ENCODE measurements at regions of chr17 and their contacts with region 1.

Region 1: GRCh38 chr17:69592692-69593350 is 178.3 kb downstream of the MAP2K6 start:
- DNase-seq: no peak
- H3K4me3 ChIP-seq: no peak overlapping the region
- H3K27ac ChIP-seq: peak overlapping the region; percentile 33
- H3K4me1 ChIP-seq: peaks cover 22% of the 10 kb centered on the region
- H3K27me3 ChIP-seq: no peaks in the 10 kb centered on the region
- CTCF ChIP-seq: no peak
- POLR2A ChIP-seq: no peak

Region 2: GRCh38 chr17:69575346-69575761 is 17.5 kb before region 1 on chr17:
- CTCF ChIA-PET with region 1: interaction called, 5 read pairs
- POLR2A ChIA-PET with region 1: no interaction called
- dilution Hi-C with region 1: no loop called
- intact Hi-C with region 1: loop called (anchors 2 kb)
- DNase-seq: peak; percentile 82
- H3K4me3 ChIP-seq: no peak overlapping the region
- H3K27ac ChIP-seq: no peak overlapping the region
- H3K4me1 ChIP-seq: peaks cover 18% of the 10 kb centered on the region
- H3K27me3 ChIP-seq: peaks cover 5 to 12% of the 10 kb centered on the region in 2 experiments
- CTCF ChIP-seq: no peak
- POLR2A ChIP-seq: no peak

Measured in endothelial cell of umbilical vein (primary cell).